SK-N-SH (cell line): ENCODE measurements at regions of chr3 and their contacts with region 1.

Region 1: DNA sequence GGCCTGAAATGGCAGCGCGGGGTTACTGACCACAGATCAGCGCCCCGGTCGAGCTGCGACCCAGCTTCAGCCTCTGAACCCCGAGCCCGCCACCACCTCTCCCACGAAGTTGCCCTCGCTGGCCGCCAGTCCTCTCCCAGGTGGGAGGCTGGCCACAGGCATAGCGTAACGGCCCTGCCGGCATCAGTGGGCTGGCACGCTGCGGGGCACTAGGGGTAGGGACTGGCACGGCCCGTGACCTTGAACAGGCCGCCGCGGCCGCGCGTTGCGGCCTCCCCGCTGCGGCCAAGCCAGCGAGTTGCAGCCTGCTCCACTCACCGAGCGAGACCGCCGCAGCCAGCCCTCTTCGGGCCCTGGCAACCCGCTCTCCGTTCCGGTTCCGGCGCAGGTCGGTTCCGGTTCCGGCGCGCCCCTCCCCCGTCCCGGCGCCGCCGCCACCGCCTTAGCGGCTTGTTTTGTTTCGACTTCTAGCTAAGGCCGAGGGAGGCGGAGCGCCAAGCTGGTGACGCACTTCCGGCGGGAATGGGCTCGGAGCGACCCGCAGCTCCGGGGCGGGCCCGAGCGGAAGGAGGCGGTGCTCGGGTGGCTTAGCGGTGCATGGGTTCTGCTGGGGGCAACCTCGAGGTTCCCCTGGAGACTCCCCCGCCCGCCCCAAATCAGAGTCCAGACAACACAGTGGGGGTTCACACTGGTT is at the start of gene USP19:
- DNase-seq: peak; percentile 99
- H3K4me3 ChIP-seq: peak within 1 kb of the TSS; percentile 95 to 100
- H3K27ac ChIP-seq: peak within 1 kb of the TSS; percentile 96 to 98
- H3K4me1 ChIP-seq: peaks cover 7 to 19% of the 10 kb centered on the region in 2 experiments; a peak in 2 of 4 replicates
- H3K27me3 ChIP-seq: no peaks in the 10 kb centered on the region
- CTCF ChIP-seq: no peak
- EP300 ChIP-seq: no peak; a peak in 1 of 4 replicates
- RAD21 ChIP-seq: no peak
- polyA plus RNA-seq, gene USP19: 75.6 and 80.5 TPM in 2 replicates

Region 2: GRCh38 chr3:49104483-49105291 is 15.9 kb before region 1 on chr3 and contains the start of gene QARS1:
- CTCF ChIA-PET with region 1: interaction called, 4 read pairs
- POLR2A ChIA-PET with region 1: interaction called, 13 read pairs
- DNase-seq: peak; percentile 98
- H3K4me3 ChIP-seq: peak within 1 kb of the TSS; percentile 87 to 99
- H3K27ac ChIP-seq: peak within 1 kb of the TSS; percentile 80 to 93
- H3K4me1 ChIP-seq: peaks cover 6 to 18% of the 10 kb centered on the region in 2 experiments; a peak in 2 of 4 replicates
- H3K27me3 ChIP-seq: no peaks in the 10 kb centered on the region
- CTCF ChIP-seq: no peak
- EP300 ChIP-seq: peak in 1 of 2 experiments; percentile 6; a peak in 1 of 4 replicates
- RAD21 ChIP-seq: peak; percentile 11; the same call in 1 of the 2 replicates
- polyA plus RNA-seq, gene QARS1: 311 and 381 TPM in 2 replicates

Region 3: GRCh38 chr3:49133226-49133951 is 12.8 kb after region 1 on chr3:
- CTCF ChIA-PET with region 1: interaction called, 26 read pairs
- POLR2A ChIA-PET with region 1: interaction called, 16 read pairs
- DNase-seq: peak; percentile 89
- H3K4me3 ChIP-seq: peak overlapping the region; percentile 67 to 81
- H3K27ac ChIP-seq: peak overlapping the region; percentile 83 to 91
- H3K4me1 ChIP-seq: peaks cover 0 to 18% of the 10 kb centered on the region in 2 experiments; a peak in 1 of 4 replicates
- H3K27me3 ChIP-seq: no peaks in the 10 kb centered on the region
- CTCF ChIP-seq: no peak
- EP300 ChIP-seq: peak in 1 of 2 experiments; percentile 30; a peak in 2 of 4 replicates
- RAD21 ChIP-seq: no peak